ENCODE measurements at regions of chr13 and their contacts with region 1.

Region 1: DNA sequence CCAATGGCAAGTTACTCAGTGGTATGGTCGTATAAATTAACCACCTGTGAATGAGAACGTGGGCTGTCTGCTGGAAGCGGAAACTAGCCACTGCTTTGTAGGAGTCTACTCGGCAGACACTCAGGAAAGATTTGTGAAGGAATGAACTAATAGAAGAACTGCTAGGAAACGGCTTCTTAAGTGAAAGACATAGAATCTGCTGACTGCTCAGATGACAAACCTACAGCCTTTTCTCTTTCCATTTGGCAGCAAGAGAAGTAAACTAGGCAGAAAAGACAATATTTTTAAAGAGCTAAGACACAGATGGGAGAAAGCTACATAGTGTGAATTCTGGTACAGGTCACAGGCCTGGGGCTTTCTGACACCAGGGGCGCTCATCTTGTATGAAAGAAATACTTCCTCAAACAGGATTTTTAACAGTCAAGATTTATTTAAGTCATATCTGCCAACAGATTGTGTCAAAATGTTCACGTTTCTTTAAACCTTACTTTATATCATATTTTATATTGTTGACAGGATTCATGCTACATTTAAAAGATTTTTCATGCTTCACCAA is 78.4 kb downstream of the MIPEP start:
- DNase-seq: no peak
- ATAC-seq: peak; percentile 76
- H3K4me3 ChIP-seq: no peak overlapping the region
- H3K27ac ChIP-seq: peak overlapping the region; percentile 81
- H3K4me1 ChIP-seq: peaks cover 56% of the 10 kb centered on the region
- H3K27me3 ChIP-seq: no peaks in the 10 kb centered on the region
- CTCF ChIP-seq: peak; percentile 41 to 57 (median 51); a peak in 4 of 6 replicates
- EP300 ChIP-seq: 0 out of 4 replicates have a peak, but pooled peaks of 1 of the 2 experiments have one; percentile 35
- POLR2A ChIP-seq: no peak
- RAD21 ChIP-seq: peak; percentile 53

Region 2: DNA sequence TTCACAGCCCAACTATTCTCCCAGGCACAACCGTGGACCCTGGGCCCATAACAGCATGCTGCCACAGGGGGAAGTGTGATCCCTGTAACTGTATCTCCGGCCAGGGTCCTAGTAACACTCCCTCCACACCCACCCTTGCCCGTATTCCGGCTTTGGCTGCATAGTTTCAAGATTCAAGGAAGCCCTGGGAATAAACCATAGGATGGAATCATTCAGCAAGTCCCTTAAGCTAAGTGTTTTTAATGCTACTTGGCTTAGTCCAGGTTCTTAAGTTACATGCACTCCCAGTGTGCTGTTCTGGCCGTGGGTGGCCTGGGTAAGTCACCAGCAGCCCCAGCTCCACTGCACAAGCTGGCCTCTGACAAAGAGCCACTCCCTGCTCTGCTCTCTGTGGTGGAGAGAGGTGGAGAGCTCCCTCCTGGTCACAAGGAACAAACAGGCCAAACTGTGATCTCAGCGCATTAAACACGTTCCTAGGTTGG is 1162.4 kb before region 1 on chr13:
- CTCF ChIA-PET with region 1: no interaction called
- POLR2A ChIA-PET with region 1: no interaction called
- RAD21 ChIA-PET with region 1: no interaction called
- SMC1A ChIA-PET with region 1: no interaction called
- in situ Hi-C with region 1: no loop called
- intact Hi-C with region 1: no loop called
- DNase-seq: no peak
- ATAC-seq: no peak
- H3K4me3 ChIP-seq: no peak overlapping the region
- H3K27ac ChIP-seq: no peak overlapping the region
- H3K4me1 ChIP-seq: no peaks in the 10 kb centered on the region
- H3K27me3 ChIP-seq: no peaks in the 10 kb centered on the region
- CTCF ChIP-seq: no peak
- EP300 ChIP-seq: no peak
- POLR2A ChIP-seq: no peak
- RAD21 ChIP-seq: no peak

Region 3: DNA sequence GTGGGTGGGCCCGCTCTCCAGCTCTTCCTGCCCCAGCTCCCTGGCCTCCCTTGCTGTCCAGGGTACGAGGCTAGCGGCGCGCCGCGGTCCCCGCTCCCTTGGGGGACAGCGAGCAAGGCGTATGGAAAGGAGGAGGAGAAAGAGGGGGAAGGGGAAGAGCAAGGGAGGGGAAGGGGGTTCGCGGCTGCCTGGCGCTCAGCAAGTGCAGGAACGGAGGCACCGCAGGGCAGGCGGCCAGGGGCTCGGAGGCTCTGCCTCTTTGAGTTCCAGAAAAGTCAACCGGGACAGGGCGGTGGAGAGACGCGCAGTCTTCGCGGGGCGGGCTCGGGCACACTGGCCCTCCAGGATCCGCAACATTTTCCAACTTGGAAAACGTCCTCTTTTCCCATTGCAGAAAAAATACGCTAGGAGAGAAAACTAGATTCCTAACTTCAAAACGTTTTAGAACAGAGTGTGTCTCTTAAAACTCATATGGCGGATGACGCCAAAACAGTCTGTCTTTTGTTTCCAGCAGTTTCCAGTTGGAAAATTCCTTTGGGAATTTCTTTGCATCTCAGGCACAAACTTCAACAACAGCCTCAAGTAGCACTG is 263.7 kb before region 1 on chr13:
- CTCF ChIA-PET with region 1: no interaction called
- POLR2A ChIA-PET with region 1: no interaction called
- RAD21 ChIA-PET with region 1: no interaction called
- SMC1A ChIA-PET with region 1: no interaction called
- in situ Hi-C with region 1: no loop called
- intact Hi-C with region 1: no loop called
- DNase-seq: no peak
- ATAC-seq: peak; percentile 47
- H3K4me3 ChIP-seq: no peak overlapping the region
- H3K27ac ChIP-seq: no peak overlapping the region
- H3K4me1 ChIP-seq: peaks cover 6% of the 10 kb centered on the region; the same call in 1 of the 2 replicates
- H3K27me3 ChIP-seq: peaks cover 0 to 1% of the 10 kb centered on the region in 2 experiments; a peak in 1 of 4 replicates
- CTCF ChIP-seq: no peak
- EP300 ChIP-seq: no peak
- POLR2A ChIP-seq: no peak
- RAD21 ChIP-seq: no peak

Region 4: GRCh38 chr13:23794267-23795161 is 16.2 kb before region 1 on chr13:
- CTCF ChIA-PET with region 1: interaction called, 11 read pairs
- POLR2A ChIA-PET with region 1: interaction called, 3 read pairs
- RAD21 ChIA-PET with region 1: interaction called, 11 read pairs
- SMC1A ChIA-PET with region 1: interaction called, 11 read pairs
- in situ Hi-C with region 1: no loop called
- intact Hi-C with region 1: no loop called
- DNase-seq: peak; percentile 72
- ATAC-seq: peak; percentile 72
- H3K4me3 ChIP-seq: 0 out of 2 replicates have a peak overlapping the region, but pooled peaks have one; percentile 22
- H3K27ac ChIP-seq: peak overlapping the region; percentile 93
- H3K4me1 ChIP-seq: peaks cover 51% of the 10 kb centered on the region
- H3K27me3 ChIP-seq: no peaks in the 10 kb centered on the region
- CTCF ChIP-seq: no peak
- EP300 ChIP-seq: peak; percentile 67 to 98
- POLR2A ChIP-seq: no peak
- RAD21 ChIP-seq: no peak

Region 5: GRCh38 chr13:23851106-23851505 is 40.3 kb after region 1 on chr13:
- CTCF ChIA-PET with region 1: interaction called, 16 read pairs
- POLR2A ChIA-PET with region 1: interaction called, 14 read pairs
- RAD21 ChIA-PET with region 1: interaction called, 26 read pairs
- SMC1A ChIA-PET with region 1: interaction called, 40 read pairs
- in situ Hi-C with region 1: no loop called
- intact Hi-C with region 1: loop called (anchors 5 kb)
- DNase-seq: no peak
- ATAC-seq: no peak
- H3K4me3 ChIP-seq: no peak overlapping the region
- H3K27ac ChIP-seq: no peak overlapping the region
- H3K4me1 ChIP-seq: peaks cover 56% of the 10 kb centered on the region
- H3K27me3 ChIP-seq: no peaks in the 10 kb centered on the region
- CTCF ChIP-seq: no peak
- EP300 ChIP-seq: no peak
- POLR2A ChIP-seq: no peak
- RAD21 ChIP-seq: no peak

Region 6: GRCh38 chr13:23956106-23956505 is 145.3 kb after region 1 on chr13:
- CTCF ChIA-PET with region 1: no interaction called
- POLR2A ChIA-PET with region 1: no interaction called
- RAD21 ChIA-PET with region 1: no interaction called
- SMC1A ChIA-PET with region 1: no interaction called
- in situ Hi-C with region 1: no loop called
- intact Hi-C with region 1: no loop called
- DNase-seq: no peak
- ATAC-seq: peak; percentile 87
- H3K4me3 ChIP-seq: no peak overlapping the region
- H3K27ac ChIP-seq: no peak overlapping the region
- H3K4me1 ChIP-seq: no peaks in the 10 kb centered on the region
- H3K27me3 ChIP-seq: no peaks in the 10 kb centered on the region; a peak in 1 of 4 replicates
- CTCF ChIP-seq: no peak
- EP300 ChIP-seq: peak; percentile 19 to 23; a peak in 1 of 4 replicates
- POLR2A ChIP-seq: no peak
- RAD21 ChIP-seq: no peak

Measured in GM12878 (cell line).